Dendritic cell treated with granulocyte-macrophage colony-stimulating factor and Interleukin-4, amounts not matched to agents 40 ng/mL and 50 ng/mL, for 4 days (primary cell): ENCODE measurements at regions of chr10 and their contacts with region 1.

Region 1: DNA sequence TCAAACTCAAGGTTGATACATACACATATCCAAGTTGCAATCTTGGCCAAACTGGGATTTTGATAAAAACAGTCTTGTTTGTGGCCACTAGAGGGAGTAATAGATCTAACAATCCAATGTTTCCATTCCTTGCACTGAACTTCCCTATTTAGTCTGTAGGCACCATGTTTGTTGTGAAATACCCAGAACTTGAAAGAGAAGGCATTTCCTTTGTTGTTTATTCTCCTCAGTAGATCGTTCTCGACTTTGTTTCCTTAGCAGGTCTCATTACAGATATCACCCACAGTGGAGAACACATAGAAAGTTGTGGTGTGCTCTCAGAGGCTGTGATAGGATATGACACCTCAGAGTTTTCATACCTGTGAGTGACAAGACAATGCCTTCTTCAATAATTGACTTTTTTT is 70.3 kb upstream of the MXI1 start:
- H3K4me3 Mint-ChIP-seq: peak overlapping the region; percentile 6
- H3K27ac Mint-ChIP-seq: peak overlapping the region; percentile 74
- H3K4me1 Mint-ChIP-seq: peaks cover 26% of the 10 kb centered on the region
- H3K27me3 Mint-ChIP-seq: no peaks in the 10 kb centered on the region

Region 2: GRCh38 chr10:109883859-109884771 is 253.0 kb before region 1 on chr10:
- intact Hi-C with region 1: loop called (anchors 10 kb)
- H3K4me3 Mint-ChIP-seq: no peak overlapping the region
- H3K27ac Mint-ChIP-seq: no peak overlapping the region
- H3K4me1 Mint-ChIP-seq: peaks cover 27% of the 10 kb centered on the region
- H3K27me3 Mint-ChIP-seq: no peaks in the 10 kb centered on the region

Region 3: GRCh38 chr10:110176141-110177030 is 39.2 kb after region 1 on chr10:
- intact Hi-C with region 1: loop called (anchors 5 kb)
- H3K4me3 Mint-ChIP-seq: peak overlapping the region; percentile 32
- H3K27ac Mint-ChIP-seq: no peak overlapping the region
- H3K4me1 Mint-ChIP-seq: peaks cover 18% of the 10 kb centered on the region
- H3K27me3 Mint-ChIP-seq: peaks cover 31% of the 10 kb centered on the region

Region 4: DNA sequence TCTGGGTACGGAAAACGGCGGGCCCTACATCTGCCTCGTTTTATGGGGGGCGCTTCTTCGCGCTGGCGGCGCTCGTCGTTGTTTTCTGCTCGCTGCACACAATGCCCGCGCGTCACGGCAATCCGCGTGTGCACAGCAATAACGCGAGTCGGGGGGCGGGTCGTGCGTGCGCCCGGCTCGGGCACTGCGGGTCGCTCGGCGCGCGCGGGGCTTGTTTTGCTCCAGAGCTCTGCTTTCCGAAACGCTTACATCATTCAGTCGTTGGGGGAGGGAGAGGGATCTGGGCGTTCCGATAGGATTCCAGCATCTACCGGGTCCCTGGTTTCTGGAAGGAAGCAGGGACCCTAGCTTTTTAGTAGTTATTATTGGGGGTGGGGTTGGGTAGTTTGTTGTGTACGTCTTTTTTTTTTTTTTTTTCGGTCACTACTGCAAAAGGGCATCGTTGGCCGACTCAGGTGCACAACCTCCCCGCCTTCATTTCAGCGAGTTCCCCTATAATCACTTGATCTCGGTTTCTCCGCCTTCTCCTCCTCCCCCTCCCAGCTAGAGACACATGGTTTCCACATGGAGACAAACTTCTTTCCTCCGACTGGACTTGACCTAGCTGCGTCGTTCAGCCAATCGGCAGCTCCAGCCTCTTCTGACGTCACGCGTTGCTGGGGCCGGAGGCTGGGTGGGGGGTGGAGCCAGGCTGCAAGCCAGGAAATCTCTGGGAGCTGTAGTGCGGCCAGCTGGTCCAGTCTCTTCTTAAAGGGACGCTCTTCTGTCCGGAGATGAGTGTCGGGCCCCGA is 73.7 kb after region 1 on chr10:
- intact Hi-C with region 1: loop called (anchors 5 kb)
- H3K4me3 Mint-ChIP-seq: peak overlapping the region; percentile 95
- H3K27ac Mint-ChIP-seq: peak overlapping the region; percentile 92
- H3K4me1 Mint-ChIP-seq: peaks cover 69% of the 10 kb centered on the region
- H3K27me3 Mint-ChIP-seq: peaks cover 13% of the 10 kb centered on the region

Region 5: GRCh38 chr10:110279407-110279986 is 142.4 kb after region 1 on chr10:
- intact Hi-C with region 1: loop called (anchors 1 kb)
- H3K4me3 Mint-ChIP-seq: no peak overlapping the region
- H3K27ac Mint-ChIP-seq: no peak overlapping the region
- H3K4me1 Mint-ChIP-seq: peaks cover 3% of the 10 kb centered on the region
- H3K27me3 Mint-ChIP-seq: no peaks in the 10 kb centered on the region

Region 6: DNA sequence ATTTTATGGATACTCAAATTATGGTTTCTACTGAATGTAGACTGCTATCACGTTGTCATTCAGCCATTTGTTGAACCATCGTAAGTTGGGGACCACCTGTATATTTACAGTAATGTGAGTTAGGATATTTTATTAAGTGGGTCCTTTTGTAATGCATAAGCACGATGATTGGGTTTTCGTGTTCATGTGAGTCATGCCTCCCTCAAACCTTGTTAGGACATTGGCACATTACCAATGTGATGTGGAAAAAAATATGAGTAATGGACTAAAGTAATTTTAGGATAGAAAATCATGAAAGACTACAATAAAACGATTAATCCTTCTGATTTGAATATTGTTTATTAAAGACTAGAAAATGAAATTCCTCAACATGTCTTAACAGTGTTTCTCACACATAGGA is 439.1 kb after region 1 on chr10:
- intact Hi-C with region 1: loop called (anchors 10 kb)
- H3K4me3 Mint-ChIP-seq: no peak overlapping the region
- H3K27ac Mint-ChIP-seq: no peak overlapping the region
- H3K4me1 Mint-ChIP-seq: peaks cover 10% of the 10 kb centered on the region
- H3K27me3 Mint-ChIP-seq: no peaks in the 10 kb centered on the region